Activated naive CD4-positive, alpha-beta T cell treated with anti-CD3 and anti-CD28 coated beads for 36 hours (primary cell): ENCODE measurements at regions of chr2 and their contacts with region 1.

Region 1: GRCh38 chr2:73385595-73386341 is at the start of gene ALMS1:
- DNase-seq: peak; percentile 91
- H3K4me3 Mint-ChIP-seq: peak within 1 kb of the TSS; percentile 92
- H3K27ac Mint-ChIP-seq: peak within 1 kb of the TSS; percentile 86
- H3K4me1 Mint-ChIP-seq: peaks cover 28% of the 10 kb centered on the region
- H3K27me3 Mint-ChIP-seq: no peaks in the 10 kb centered on the region
- total RNA-seq, gene ALMS1: 15.4 to 15.8 TPM

Region 2: GRCh38 chr2:73071360-73072133 is 314.2 kb before region 1 on chr2 and contains the start of gene SFXN5:
- CTCF ChIA-PET with region 1: no interaction called
- intact Hi-C with region 1: loop called (anchors 2 kb)
- DNase-seq: peak; percentile 96
- H3K4me3 Mint-ChIP-seq: peak within 1 kb of the TSS; percentile 88
- H3K27ac Mint-ChIP-seq: peak within 1 kb of the TSS; percentile 87
- H3K4me1 Mint-ChIP-seq: peaks cover 20% of the 10 kb centered on the region
- H3K27me3 Mint-ChIP-seq: no peaks in the 10 kb centered on the region
- total RNA-seq, gene SFXN5: 5.3 to 6.8 TPM

Region 3: GRCh38 chr2:73233154-73233931 is 152.4 kb before region 1 on chr2 and contains the start of gene PRADC1:
- CTCF ChIA-PET with region 1: no interaction called
- intact Hi-C with region 1: loop called (anchors 1 kb)
- DNase-seq: peak; percentile 97
- H3K4me3 Mint-ChIP-seq: peak within 1 kb of the TSS; percentile 88
- H3K27ac Mint-ChIP-seq: peak within 1 kb of the TSS; percentile 77
- H3K4me1 Mint-ChIP-seq: peaks cover 31% of the 10 kb centered on the region
- H3K27me3 Mint-ChIP-seq: no peaks in the 10 kb centered on the region
- total RNA-seq, gene PRADC1: 10.1 to 10.2 TPM

Region 4: GRCh38 chr2:73293534-73294171 is 92.1 kb before region 1 on chr2 and contains the start of gene EGR4:
- CTCF ChIA-PET with region 1: interaction called, 4 read pairs
- intact Hi-C with region 1: loop called (anchors 1 kb)
- DNase-seq: peak; percentile 94
- H3K4me3 Mint-ChIP-seq: peak within 1 kb of the TSS; percentile 73
- H3K27ac Mint-ChIP-seq: no peak within 1 kb of the TSS
- H3K4me1 Mint-ChIP-seq: peaks cover 14% of the 10 kb centered on the region
- H3K27me3 Mint-ChIP-seq: peaks cover 65% of the 10 kb centered on the region
- total RNA-seq, gene EGR4: 0.07 to 0.12 TPM

Region 5: GRCh38 chr2:73779467-73780236 is 393.9 kb after region 1 on chr2 and contains the start of gene DUSP11:
- CTCF ChIA-PET with region 1: no interaction called
- intact Hi-C with region 1: loop called (anchors 10 kb)
- DNase-seq: peak; percentile 99
- H3K4me3 Mint-ChIP-seq: peak within 1 kb of the TSS; percentile 99
- H3K27ac Mint-ChIP-seq: peak within 1 kb of the TSS; percentile 96
- H3K4me1 Mint-ChIP-seq: peaks cover 24% of the 10 kb centered on the region
- H3K27me3 Mint-ChIP-seq: peaks cover 2% of the 10 kb centered on the region
- total RNA-seq, gene DUSP11: 22.7 to 24.4 TPM

Region 6: DNA sequence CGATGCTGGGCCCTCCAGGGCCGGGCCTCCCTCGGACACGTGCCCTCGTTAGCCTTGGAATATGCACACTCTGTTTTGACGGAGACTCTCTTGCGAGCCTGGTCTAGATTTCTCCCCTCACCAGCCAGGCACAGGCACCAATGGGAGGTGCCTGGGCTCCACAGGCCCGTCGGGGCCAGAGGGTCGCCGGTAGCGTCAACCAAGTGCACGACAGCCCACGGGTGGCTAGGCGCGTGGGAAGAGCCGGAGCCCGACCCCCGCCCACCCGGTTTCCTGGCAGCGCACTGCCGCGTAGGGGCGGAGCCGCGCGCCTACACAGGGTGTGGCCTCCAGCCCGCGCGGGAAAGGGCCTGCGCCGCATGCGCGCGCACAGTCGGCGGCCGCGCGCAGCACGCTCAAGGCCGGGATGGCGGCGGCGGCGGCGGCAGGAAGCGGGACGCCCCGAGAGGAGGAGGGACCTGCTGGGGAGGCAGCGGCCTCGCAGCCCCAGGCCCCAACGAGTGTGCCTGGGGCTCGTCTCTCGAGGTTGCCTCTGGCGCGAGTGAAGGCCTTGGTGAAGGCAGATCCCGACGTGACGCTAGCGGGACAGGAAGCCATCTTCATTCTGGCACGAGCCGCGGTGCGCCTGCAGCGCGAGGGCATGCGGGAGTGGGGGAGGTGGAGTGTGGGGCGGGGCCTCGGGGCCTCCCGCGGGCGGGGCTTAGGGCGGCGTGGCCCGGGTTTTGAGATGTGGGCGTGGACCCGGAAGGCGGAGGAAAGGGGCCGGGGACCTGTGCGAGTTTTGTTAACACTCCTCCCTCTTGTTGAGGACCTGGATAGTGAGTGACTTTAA is 1572.7 kb after region 1 on chr2 and contains the start of gene POLE4:
- CTCF ChIA-PET with region 1: no interaction called
- intact Hi-C with region 1: loop called (anchors 2 kb)
- DNase-seq: peak; percentile 95
- H3K4me3 Mint-ChIP-seq: peak within 1 kb of the TSS; percentile 80
- H3K27ac Mint-ChIP-seq: peak within 1 kb of the TSS; percentile 87
- H3K4me1 Mint-ChIP-seq: peaks cover 60% of the 10 kb centered on the region
- H3K27me3 Mint-ChIP-seq: no peaks in the 10 kb centered on the region
- total RNA-seq, gene POLE4: 69.7 to 76.5 TPM